ENCODE measurements at regions of chr11 and their contacts with region 1.

Region 1: GRCh38 chr11:60970369-60970774 is 1.1 kb upstream of the CD6 start:
- DNase-seq: peak; percentile 81
- CTCF ChIP-seq: peak; percentile 90

Region 2: GRCh38 chr11:60950933-60951620 is 19.3 kb before region 1 on chr11:
- CTCF ChIA-PET with region 1: interaction called, 24 read pairs
- POLR2A ChIA-PET with region 1: no interaction called
- DNase-seq: no peak
- CTCF ChIP-seq: no peak

Region 3: GRCh38 chr11:60992842-60993409 is 22.6 kb after region 1 on chr11:
- CTCF ChIA-PET with region 1: interaction called, 18 read pairs
- POLR2A ChIA-PET with region 1: no interaction called
- DNase-seq: no peak
- CTCF ChIP-seq: no peak

Region 4: DNA sequence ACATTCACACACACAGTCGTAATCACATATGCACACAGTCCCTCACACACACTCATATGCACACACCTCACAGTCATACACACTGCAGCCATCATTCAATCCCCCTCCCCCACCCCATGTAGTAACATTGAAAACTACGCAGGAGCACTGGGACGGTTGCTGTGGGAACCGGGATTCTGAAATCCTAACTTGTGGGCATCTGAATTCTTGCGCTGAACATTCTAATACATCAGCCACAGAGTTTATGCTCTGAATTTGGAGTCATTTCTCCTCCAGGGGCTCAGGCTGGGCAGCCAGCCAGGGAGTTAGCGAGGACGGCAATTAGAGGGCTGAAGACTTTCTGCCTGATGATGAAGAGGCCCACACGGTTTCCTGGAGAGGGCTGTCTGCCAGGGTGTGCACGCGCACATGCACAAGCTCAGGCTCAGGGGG is 33.8 kb after region 1 on chr11:
- CTCF ChIA-PET with region 1: interaction called, 10 read pairs
- POLR2A ChIA-PET with region 1: no interaction called
- DNase-seq: no peak
- CTCF ChIP-seq: no peak